ENCODE measurements at regions of chr1 and their contacts with region 1.

Region 1: GRCh38 chr1:10975567-10976326 is 36.7 kb upstream of the TARDBP start:
- DNase-seq: peak; percentile 74
- H3K4me3 ChIP-seq: no peak overlapping the region
- H3K27ac ChIP-seq: peak overlapping the region; percentile 50 to 55
- H3K4me1 ChIP-seq: peaks cover 3% of the 10 kb centered on the region
- H3K27me3 ChIP-seq: no peaks in the 10 kb centered on the region
- CTCF ChIP-seq: no peak
- POLR2A ChIP-seq: no peak

Region 2: GRCh38 chr1:11012250-11013171 is 36.8 kb after region 1 on chr1 and contains the start of gene TARDBP:
- intact Hi-C with region 1: loop called (anchors 5 kb)
- DNase-seq: peak; percentile 84
- H3K4me3 ChIP-seq: peak within 1 kb of the TSS; percentile 93 to 99
- H3K27ac ChIP-seq: peak within 1 kb of the TSS; percentile 94 to 96
- H3K4me1 ChIP-seq: peaks cover 8% of the 10 kb centered on the region
- H3K27me3 ChIP-seq: no peaks in the 10 kb centered on the region
- CTCF ChIP-seq: no peak
- POLR2A ChIP-seq: peak; percentile 92
- total RNA-seq, gene TARDBP: 93.7 to 151 TPM

Region 3: DNA sequence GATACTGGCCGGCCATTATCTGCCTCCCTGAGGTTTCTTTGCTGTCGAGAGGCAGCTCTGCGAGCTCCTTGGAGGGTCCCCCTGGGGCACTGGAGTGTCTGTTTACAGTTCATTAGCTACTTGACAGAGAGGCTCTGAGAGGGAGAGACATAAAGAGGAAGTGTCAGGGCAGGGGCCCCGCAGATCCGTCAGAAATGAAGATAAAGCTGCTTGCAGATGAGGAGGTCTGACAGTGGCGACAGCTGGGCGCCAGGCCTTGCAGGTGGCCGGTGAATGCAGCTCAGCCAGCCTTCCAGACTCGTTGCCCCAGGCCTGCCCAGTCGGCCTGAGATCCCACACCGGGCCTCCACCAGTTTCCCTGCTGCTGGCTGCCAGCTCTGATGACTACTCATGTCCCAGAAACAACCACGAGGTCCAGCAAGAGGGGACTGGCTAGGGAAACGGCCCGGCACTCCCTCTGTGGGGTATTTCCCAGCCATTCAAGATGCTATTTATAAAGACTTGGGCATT is 587.9 kb after region 1 on chr1:
- intact Hi-C with region 1: no loop called
- DNase-seq: no peak
- H3K4me3 ChIP-seq: no peak overlapping the region
- H3K27ac ChIP-seq: no peak overlapping the region
- H3K4me1 ChIP-seq: no peaks in the 10 kb centered on the region
- H3K27me3 ChIP-seq: peaks cover 8% of the 10 kb centered on the region
- CTCF ChIP-seq: no peak
- POLR2A ChIP-seq: no peak